ENCODE measurements at regions of chr6 and their contacts with region 1.

Region 1: DNA sequence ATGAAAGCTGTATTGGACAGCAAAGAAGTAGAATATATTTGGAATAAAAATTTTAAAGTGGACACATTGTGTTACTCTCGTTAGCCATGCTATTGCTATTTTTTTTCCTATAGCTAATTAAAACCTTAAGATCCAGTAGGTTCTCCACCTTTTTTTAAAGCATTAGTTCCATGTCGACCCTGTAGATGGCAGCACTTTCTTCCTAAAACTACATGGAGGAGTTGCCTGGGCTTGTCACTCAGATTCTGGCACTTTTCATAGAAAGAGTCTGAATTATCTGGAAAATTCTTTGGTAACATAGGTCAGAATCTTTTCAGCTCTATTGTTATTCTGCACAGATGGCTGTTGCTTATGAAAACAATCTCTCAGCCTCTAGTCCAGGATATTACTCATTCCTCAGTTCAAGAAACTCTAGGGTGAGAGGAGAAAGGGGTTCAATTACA is 42.0 kb upstream of the ESR1 start:
- DNase-seq: peak; percentile 81
- H3K4me3 ChIP-seq: peak overlapping the region; percentile 12
- H3K27ac ChIP-seq: no peak overlapping the region
- H3K4me1 ChIP-seq: peaks cover 5% of the 10 kb centered on the region
- H3K27me3 ChIP-seq: peaks cover 25% of the 10 kb centered on the region
- CTCF ChIP-seq: peak; percentile 80

Region 2: GRCh38 chr6:151436802-151437201 is 328.7 kb before region 1 on chr6:
- CTCF ChIA-PET with region 1: no interaction called
- POLR2A ChIA-PET with region 1: no interaction called
- intact Hi-C with region 1: loop called (anchors 10 kb)
- DNase-seq: peak; percentile 62
- H3K4me3 ChIP-seq: no peak overlapping the region
- H3K27ac ChIP-seq: peak overlapping the region; percentile 56
- H3K4me1 ChIP-seq: peaks cover 30% of the 10 kb centered on the region
- H3K27me3 ChIP-seq: no peaks in the 10 kb centered on the region
- CTCF ChIP-seq: no peak

Region 3: DNA sequence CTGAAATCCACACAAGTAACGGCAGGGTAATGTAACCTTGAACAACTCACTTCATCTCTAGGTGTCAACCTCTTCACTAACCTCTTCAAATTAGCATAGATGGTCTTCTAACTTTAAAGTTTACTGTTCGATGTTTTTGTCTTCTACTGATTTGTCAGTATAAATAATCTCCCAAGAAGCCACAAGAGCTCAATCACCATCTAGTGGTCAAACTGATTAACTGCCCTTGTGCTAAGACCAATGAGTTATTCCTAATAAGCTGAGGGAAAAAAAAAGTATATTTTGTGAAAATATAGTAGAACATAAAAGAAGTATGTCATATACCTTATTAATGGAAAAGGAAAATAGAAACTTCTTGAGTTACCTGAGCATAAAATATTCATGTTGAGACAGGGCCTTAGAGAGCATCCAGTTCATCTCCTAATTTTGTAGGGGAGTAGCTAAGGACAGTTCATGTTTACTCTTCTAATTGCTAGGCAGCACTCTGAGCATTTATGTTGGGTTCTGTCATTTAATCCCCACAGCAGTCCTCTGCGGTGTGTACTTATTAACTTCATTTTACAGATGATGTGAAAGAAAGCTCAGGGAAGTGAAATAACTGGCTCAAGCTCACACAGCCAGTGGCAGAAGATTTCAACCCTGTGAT is 359.1 kb after region 1 on chr6:
- CTCF ChIA-PET with region 1: interaction called, 8 read pairs
- POLR2A ChIA-PET with region 1: no interaction called
- intact Hi-C with region 1: loop called (anchors 1 kb)
- DNase-seq: peak; percentile 52
- H3K4me3 ChIP-seq: no peak overlapping the region
- H3K27ac ChIP-seq: no peak overlapping the region
- H3K4me1 ChIP-seq: no peaks in the 10 kb centered on the region
- H3K27me3 ChIP-seq: no peaks in the 10 kb centered on the region
- CTCF ChIP-seq: peak; percentile 72

Region 4: DNA sequence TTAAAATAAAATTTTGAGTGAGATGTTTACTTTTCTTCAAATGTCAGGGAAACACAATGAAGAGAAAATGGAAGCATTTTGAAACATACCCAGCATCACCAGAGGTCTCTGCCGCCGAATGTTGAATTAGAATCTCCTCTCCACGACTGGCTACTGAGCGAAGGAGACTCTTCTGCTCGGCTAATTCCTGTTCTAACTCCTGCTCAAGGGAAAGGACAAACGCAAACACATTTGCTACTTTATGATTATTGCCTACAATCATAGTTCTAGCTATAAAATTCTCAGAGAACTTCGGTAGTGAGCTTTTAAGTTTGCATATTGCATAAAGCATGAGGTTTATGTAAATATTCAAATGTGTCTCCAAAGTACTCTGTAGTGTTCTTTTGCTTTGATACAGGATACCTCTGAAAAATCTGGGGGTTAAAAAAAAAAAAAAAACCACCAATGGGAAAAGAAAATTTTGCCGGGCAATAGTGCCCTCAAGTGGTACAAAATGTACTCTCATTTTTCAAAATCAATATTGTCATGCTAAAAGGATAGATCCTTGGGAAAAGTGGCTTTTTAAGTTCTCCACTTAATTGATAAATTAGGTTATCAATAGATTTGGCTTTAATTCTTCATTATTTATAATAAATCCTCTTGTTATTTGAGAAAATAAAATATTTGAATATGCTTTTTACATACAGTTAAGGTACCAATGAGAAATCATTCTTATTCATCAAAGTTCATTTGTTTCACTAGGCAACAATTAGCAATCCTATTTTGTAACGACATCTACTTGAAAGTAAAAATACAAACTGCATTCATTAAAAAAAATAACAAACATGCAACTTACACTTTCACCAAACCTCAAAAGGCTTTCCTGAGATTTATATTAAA is 502.7 kb after region 1 on chr6:
- CTCF ChIA-PET with region 1: interaction called, 3 read pairs
- POLR2A ChIA-PET with region 1: no interaction called
- intact Hi-C with region 1: loop called (anchors 2 kb)
- DNase-seq: peak; percentile 52
- H3K4me3 ChIP-seq: no peak overlapping the region
- H3K27ac ChIP-seq: no peak overlapping the region
- H3K4me1 ChIP-seq: peaks cover 38% of the 10 kb centered on the region
- H3K27me3 ChIP-seq: no peaks in the 10 kb centered on the region
- CTCF ChIP-seq: peak; percentile 75

Region 5: GRCh38 chr6:152338335-152339125 is 573.1 kb after region 1 on chr6:
- CTCF ChIA-PET with region 1: interaction called, 3 read pairs
- POLR2A ChIA-PET with region 1: no interaction called
- intact Hi-C with region 1: loop called (anchors 10 kb)
- DNase-seq: peak; percentile 54
- H3K4me3 ChIP-seq: no peak overlapping the region
- H3K27ac ChIP-seq: no peak overlapping the region
- H3K4me1 ChIP-seq: no peaks in the 10 kb centered on the region
- H3K27me3 ChIP-seq: no peaks in the 10 kb centered on the region
- CTCF ChIP-seq: peak; percentile 90